Posterior vena cava (tissue), 2 donors: ENCODE measurements at regions of chr9 and their contacts with region 1.

Region 1: GRCh38 chr9:74366111-74366510 is 131.0 kb upstream of the RORB start:
- DNase-seq: no peak

Region 2: DNA sequence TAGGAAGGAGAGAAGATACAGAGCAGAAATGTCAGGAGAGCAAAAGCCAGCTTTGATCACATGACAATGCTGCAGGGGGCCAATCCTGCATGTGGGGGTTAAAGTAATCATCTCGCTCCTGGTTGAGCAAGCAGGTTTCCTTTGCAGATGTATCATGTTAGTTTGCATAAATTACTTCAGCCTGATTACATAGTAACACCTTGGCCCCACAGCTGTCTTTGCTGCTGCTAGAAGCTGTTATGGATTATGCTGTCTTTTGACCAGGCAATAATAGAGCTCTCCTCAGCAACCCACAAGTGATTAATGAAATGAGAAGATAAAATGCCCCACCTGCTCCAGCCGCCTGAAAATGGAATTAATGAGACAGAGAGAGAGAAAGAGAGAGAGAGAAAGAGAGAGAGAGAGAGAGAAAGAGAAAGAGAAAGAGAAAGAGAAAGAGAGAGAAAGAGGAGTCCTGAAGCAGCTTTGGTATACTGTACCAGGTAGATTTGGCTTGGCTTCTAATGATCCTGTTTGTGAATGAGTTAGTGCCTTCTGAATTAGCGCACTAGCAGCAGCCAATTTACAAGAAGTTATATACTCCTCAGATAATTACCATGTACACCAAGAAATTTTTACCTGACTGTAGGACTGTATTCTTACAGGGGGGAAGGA is 43.3 kb before region 1 on chr9:
- intact Hi-C with region 1: loop called in 1 of 2 experiments (anchors 2 kb)
- DNase-seq: no peak

Region 3: GRCh38 chr9:74333384-74334032 is 32.6 kb before region 1 on chr9:
- intact Hi-C with region 1: loop called in 1 of 2 experiments (anchors 1 kb)
- DNase-seq: no peak